ENCODE measurements at regions of chr9 and their contacts with region 1.

Region 1: GRCh38 chr9:113737517-113738271 is 138.4 kb upstream of the ZNF618 start:
- DNase-seq: peak; percentile 55
- H3K4me3 Mint-ChIP-seq: no peak overlapping the region
- H3K27ac Mint-ChIP-seq: no peak overlapping the region
- H3K4me1 Mint-ChIP-seq: no peaks in the 10 kb centered on the region
- H3K27me3 Mint-ChIP-seq: peaks cover 16% of the 10 kb centered on the region

Region 2: GRCh38 chr9:113876151-113876992 is 138.7 kb after region 1 on chr9 and contains the start of gene ZNF618:
- CTCF ChIA-PET with region 1: interaction called, 3 read pairs
- intact Hi-C with region 1: loop called (anchors 1 kb)
- DNase-seq: no peak
- H3K4me3 Mint-ChIP-seq: peak within 1 kb of the TSS; percentile 80
- H3K27ac Mint-ChIP-seq: no peak within 1 kb of the TSS
- H3K4me1 Mint-ChIP-seq: peaks cover 4% of the 10 kb centered on the region
- H3K27me3 Mint-ChIP-seq: peaks cover 14% of the 10 kb centered on the region
- total RNA-seq, gene ZNF618: 0.02 to 0.10 TPM

Region 3: DNA sequence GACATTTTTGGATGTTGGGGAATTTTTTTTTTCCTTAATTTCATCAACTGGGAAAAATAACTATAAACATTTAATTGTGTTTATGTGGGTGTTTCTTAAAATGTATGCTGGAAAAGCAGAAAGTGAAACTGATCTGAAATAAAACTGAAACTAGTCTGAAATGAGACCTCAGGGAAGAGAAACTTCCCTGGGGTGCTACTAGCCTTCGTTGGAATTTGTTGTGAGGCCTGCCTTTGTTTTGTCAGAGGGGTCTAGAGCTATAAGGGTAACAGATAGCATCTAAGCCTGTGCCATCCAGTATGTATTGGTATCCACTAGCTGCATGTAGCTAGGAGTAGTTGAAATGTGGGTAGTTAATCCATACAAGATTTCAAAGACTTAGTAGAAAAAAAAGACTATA is 148.8 kb after region 1 on chr9:
- CTCF ChIA-PET with region 1: no interaction called
- intact Hi-C with region 1: no loop called
- DNase-seq: no peak
- H3K4me3 Mint-ChIP-seq: no peak overlapping the region
- H3K27ac Mint-ChIP-seq: no peak overlapping the region
- H3K4me1 Mint-ChIP-seq: peaks cover 14% of the 10 kb centered on the region
- H3K27me3 Mint-ChIP-seq: peaks cover 3% of the 10 kb centered on the region

Region 4: DNA sequence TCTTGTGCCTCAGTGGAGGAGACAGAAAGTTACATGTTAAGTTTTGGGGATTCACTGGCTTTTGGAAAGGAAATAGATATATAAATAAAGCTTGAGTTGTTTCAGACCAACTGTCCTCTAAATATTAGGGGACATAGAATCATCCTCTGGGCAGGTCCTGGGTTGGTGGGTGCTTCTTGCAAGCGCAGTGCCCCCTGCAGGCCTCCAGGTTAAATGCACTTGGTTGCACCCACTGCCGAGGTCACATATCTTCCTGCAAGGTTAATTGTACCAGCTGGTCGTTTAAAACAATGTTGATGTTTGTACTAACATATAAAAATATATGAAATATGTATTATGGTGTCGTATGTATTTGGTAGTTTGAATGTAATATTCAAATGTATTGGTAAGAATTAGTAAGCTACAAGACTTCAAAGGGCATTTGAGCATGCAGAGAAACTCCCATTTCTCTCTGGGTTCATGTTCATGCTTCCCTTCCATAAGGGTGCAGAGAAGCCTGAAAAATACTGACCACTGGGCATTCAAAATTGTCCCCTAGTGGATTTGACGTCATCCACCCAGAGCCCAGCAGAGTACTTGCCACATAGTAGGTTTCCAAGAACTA is 225.4 kb after region 1 on chr9:
- CTCF ChIA-PET with region 1: interaction called, 3 read pairs
- intact Hi-C with region 1: loop called (anchors 1 kb)
- DNase-seq: peak; percentile 63
- H3K4me3 Mint-ChIP-seq: no peak overlapping the region
- H3K27ac Mint-ChIP-seq: no peak overlapping the region
- H3K4me1 Mint-ChIP-seq: no peaks in the 10 kb centered on the region
- H3K27me3 Mint-ChIP-seq: no peaks in the 10 kb centered on the region